ENCODE measurements at regions of chr2 and their contacts with region 1.

Region 1: DNA sequence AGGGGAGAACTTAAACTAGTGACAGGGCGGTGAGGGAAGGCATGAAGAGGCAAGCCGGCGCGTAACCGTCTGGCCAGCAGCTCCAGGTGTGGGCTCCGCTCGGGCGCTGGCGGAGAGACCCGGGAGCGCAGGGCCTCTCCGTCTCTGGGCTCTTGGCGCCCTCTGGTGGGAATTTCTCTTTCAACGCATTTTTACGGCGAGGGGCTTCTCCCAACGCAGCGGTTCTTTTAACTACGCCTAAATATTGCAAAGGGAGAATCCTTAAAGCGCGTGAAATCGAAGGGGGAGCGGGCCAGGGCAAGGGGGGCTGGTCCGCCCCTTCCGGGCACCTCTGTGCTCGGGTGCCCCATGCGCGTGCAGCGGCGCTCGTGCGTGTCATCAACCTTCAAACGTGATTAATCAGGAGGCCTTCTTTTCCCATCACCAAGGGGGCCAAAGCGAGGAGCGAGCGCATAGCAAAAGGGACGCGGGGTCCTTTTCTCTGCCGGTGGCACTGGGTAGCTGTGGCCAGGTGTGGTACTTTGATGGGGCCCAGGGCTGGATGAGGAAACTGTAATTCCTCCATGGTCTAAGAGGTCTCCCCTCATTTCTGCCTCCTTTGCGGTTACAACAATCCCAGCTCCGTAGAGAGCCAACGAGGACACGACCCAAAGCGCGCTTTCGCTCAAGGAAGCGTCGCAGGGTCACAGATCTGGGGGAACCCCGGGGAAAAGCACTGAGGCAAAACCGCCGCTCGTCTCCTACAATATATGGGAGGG is 762 bp upstream of the GAD1 start:
- DNase-seq: peak; percentile 64
- H3K4me3 ChIP-seq: peak overlapping the region; percentile 28 to 36
- H3K27ac ChIP-seq: no peak overlapping the region
- H3K4me1 ChIP-seq: peaks cover 28% of the 10 kb centered on the region
- H3K27me3 ChIP-seq: peaks cover 39% of the 10 kb centered on the region
- CTCF ChIP-seq: peak; percentile 44 to 89 (median 71)
- POLR2A ChIP-seq: no peak

Region 2: DNA sequence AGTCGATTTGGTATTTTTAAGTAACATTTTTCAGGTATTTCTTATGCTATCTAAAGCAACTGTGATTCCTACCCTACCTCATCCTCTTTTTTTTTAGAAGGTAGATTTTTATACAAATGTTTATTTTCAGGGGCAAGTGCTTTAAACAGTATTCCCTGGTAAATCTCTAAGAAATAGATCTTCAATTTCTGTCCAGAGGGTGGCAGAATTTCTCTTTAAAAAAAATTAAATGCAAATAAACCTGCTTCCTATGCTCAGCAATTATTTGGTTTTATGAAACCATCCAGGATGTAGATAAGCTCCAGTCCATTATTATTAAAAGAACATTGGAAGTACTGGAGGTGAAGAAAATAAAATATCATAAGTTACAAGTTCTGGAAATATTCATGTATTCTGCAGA is 446.0 kb before region 1 on chr2:
- intact Hi-C with region 1: loop called (anchors 2 kb)
- DNase-seq: no peak
- H3K4me3 ChIP-seq: no peak overlapping the region
- H3K27ac ChIP-seq: no peak overlapping the region
- H3K4me1 ChIP-seq: no peaks in the 10 kb centered on the region
- H3K27me3 ChIP-seq: peaks cover 4% of the 10 kb centered on the region
- CTCF ChIP-seq: peak in 3 of 4 experiments; percentile 26 to 59 (median 54)
- POLR2A ChIP-seq: no peak

Region 3: DNA sequence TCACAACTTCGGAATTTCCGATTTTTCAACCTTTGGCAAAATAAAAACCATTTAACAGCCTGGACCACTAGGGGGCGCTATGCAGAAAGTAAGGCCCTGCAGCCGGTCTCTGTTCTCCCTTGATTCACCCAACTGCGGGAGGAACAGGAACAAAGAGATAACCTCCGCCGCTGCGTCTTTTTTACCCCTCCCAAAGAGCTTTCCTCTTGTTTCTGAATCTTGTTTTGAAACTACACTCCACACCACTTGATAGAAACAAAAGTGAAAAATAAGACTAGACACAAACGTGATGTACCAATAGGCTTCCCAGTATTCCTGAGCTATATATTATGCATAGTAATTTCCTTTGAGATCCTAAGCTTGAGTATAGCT is 406.8 kb before region 1 on chr2:
- intact Hi-C with region 1: loop called (anchors 5 kb)
- DNase-seq: peak; percentile 69
- H3K4me3 ChIP-seq: no peak overlapping the region
- H3K27ac ChIP-seq: no peak overlapping the region
- H3K4me1 ChIP-seq: no peaks in the 10 kb centered on the region
- H3K27me3 ChIP-seq: no peaks in the 10 kb centered on the region
- CTCF ChIP-seq: peak; percentile 69 to 93 (median 72)
- POLR2A ChIP-seq: no peak

Region 4: GRCh38 chr2:170493426-170494097 is 322.4 kb before region 1 on chr2:
- intact Hi-C with region 1: loop called (anchors 10 kb)
- DNase-seq: no peak
- H3K4me3 ChIP-seq: no peak overlapping the region
- H3K27ac ChIP-seq: no peak overlapping the region
- H3K4me1 ChIP-seq: no peaks in the 10 kb centered on the region
- H3K27me3 ChIP-seq: no peaks in the 10 kb centered on the region
- CTCF ChIP-seq: no peak
- POLR2A ChIP-seq: no peak